ENCODE measurements at regions of chr5 and their contacts with region 1.

Region 1: DNA sequence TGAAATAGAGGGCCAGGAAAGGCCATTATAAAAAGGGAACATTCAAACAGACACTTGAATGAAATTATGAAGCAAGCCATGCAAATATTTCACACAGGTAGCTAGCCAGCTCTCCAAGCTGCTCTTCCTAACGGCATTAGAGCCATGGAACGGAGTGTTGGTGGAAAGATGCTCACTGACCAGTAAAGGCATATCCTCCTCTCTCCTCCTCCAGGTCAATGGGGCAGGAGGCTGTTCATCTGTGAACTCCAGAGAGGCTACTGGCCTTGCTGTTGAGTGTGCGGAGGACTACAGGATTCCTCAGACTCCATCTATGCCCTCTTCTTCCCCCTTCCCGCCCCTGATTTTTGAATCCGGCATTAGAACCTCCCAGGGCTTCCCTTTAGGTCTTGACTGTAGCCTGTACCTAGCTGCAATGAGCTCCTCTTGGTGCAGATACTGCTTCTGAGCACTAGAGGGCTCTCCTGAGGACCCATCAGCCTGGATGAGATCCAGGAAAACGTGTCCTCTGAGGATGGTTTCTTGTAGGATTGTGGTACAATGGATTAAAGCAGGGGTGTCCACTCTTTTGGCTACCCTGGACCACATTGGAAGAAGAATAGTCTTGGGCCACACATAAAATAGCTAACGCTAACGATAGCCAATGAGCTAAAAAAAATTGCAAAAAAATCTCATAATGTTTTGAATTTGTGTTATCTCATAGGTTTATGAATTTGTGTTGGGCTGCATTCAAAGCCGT is 162.2 kb downstream of the SREK1 start:
- DNase-seq: peak; percentile 34 to 57
- H3K4me3 ChIP-seq: no peak overlapping the region
- H3K27ac ChIP-seq: no peak overlapping the region
- H3K4me1 ChIP-seq: no peaks in the 10 kb centered on the region
- H3K27me3 ChIP-seq: no peaks in the 10 kb centered on the region
- CTCF ChIP-seq: peak; percentile 56 to 86 (median 85)
- EP300 ChIP-seq: no peak
- POLR2A ChIP-seq: no peak
- RAD21 ChIP-seq: peak; percentile 76 to 87

Region 2: DNA sequence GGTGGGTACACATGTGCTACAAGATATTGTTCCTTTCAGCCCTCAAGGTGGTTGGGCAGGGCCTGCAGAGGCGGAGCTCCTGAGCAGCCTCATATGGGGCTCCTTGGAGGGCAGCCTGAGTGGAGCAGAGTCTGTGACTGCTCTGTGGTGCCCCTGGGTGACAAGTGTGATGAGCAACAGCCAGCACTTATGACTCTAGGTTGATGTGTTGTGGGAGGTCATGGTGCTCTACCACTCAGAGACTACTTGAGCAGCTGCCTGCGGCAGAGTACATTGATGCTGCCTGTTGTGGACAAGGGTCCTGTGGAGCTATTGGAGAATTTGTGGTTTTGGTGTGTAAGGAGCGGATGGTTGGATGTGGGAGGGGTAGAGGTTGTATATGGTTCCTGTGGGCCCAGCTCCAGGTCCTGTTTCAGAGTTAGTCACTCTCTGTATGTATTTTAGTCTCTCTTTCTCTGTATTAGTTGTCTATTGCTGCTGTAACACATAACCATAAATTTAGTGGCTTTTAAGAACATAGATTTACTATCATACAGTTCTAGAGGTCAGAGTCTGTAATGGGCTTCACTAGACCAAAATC is 20.8 kb before region 1 on chr5:
- CTCF ChIA-PET with region 1: interaction called, 14 read pairs
- POLR2A ChIA-PET with region 1: no interaction called
- DNase-seq: no peak
- H3K4me3 ChIP-seq: no peak overlapping the region
- H3K27ac ChIP-seq: no peak overlapping the region
- H3K4me1 ChIP-seq: no peaks in the 10 kb centered on the region
- H3K27me3 ChIP-seq: no peaks in the 10 kb centered on the region
- CTCF ChIP-seq: no peak
- EP300 ChIP-seq: no peak
- POLR2A ChIP-seq: no peak
- RAD21 ChIP-seq: no peak

Region 3: DNA sequence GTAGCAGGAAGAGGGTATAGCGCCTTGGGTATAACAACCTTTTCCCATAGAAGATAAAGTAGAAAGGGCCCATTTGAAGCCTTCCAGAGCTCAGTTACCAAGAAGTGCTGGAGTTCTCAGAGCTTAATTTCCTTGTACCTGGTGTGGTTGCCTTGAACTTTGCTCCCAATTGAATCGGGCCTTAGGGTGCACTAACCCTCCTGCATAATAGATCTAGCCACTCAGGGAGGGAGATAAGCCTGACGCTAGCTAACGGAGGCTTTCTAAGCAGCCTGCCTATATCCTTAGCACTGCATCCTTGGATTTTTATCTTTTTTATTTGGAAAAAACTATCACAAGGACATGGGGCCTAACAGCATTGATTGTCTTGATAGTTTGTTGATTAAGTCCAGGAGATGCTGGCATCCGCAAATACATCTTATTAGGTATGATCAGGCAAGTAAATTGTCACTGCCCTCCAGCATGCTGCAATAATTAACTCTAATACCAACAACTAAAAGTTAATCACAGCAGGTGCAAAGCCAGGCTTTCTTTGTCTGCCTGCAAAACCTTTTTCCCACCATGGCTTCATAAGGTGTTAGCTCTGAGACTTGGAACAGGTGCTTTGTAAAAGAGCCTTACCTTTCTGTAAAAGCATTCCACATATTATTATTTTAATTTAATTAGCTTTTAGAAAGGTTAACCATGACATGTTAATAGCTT is 37.2 kb after region 1 on chr5:
- CTCF ChIA-PET with region 1: interaction called, 36 read pairs
- POLR2A ChIA-PET with region 1: no interaction called
- DNase-seq: no peak
- H3K4me3 ChIP-seq: no peak overlapping the region
- H3K27ac ChIP-seq: no peak overlapping the region
- H3K4me1 ChIP-seq: no peaks in the 10 kb centered on the region
- H3K27me3 ChIP-seq: no peaks in the 10 kb centered on the region
- CTCF ChIP-seq: no peak
- EP300 ChIP-seq: no peak
- POLR2A ChIP-seq: no peak
- RAD21 ChIP-seq: no peak

Region 4: DNA sequence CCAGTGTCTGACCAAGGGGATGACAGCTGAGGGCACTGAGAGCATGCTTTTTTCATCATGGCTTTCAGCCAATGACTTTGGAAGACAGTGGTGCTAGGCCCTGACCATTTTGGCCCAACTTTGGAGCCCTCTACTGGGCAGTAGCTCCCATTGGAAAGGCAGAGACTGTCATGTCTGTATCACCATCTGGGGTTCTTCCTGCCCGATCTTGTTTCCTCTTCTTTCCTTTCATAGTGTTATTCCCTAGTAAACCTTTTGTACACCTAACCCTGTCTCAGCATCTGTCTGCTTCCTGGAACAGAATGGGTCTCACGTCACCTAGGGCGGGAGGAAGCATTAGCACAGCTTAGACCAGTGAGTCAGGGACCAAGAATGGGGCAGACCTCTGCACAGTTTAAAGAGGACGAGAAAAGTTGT is 192.5 kb after region 1 on chr5:
- CTCF ChIA-PET with region 1: interaction called, 111 read pairs
- POLR2A ChIA-PET with region 1: no interaction called
- DNase-seq: no peak
- H3K4me3 ChIP-seq: no peak overlapping the region
- H3K27ac ChIP-seq: no peak overlapping the region
- H3K4me1 ChIP-seq: no peaks in the 10 kb centered on the region; a peak in 2 of 7 replicates
- H3K27me3 ChIP-seq: no peaks in the 10 kb centered on the region
- CTCF ChIP-seq: peak; percentile 30 to 54 (median 35); a peak in 3 of 4 replicates
- EP300 ChIP-seq: no peak
- POLR2A ChIP-seq: no peak
- RAD21 ChIP-seq: peak; percentile 58 to 68

Region 5: GRCh38 chr5:66724349-66725139 is 418.3 kb after region 1 on chr5:
- CTCF ChIA-PET with region 1: interaction called, 15 read pairs
- POLR2A ChIA-PET with region 1: no interaction called
- DNase-seq: no peak
- H3K4me3 ChIP-seq: no peak overlapping the region
- H3K27ac ChIP-seq: no peak overlapping the region
- H3K4me1 ChIP-seq: peaks cover 0 to 2% (median 0%) of the 10 kb centered on the region in 4 experiments; a peak in 3 of 7 replicates
- H3K27me3 ChIP-seq: no peaks in the 10 kb centered on the region
- CTCF ChIP-seq: no peak
- EP300 ChIP-seq: no peak
- POLR2A ChIP-seq: no peak
- RAD21 ChIP-seq: no peak

Region 6: DNA sequence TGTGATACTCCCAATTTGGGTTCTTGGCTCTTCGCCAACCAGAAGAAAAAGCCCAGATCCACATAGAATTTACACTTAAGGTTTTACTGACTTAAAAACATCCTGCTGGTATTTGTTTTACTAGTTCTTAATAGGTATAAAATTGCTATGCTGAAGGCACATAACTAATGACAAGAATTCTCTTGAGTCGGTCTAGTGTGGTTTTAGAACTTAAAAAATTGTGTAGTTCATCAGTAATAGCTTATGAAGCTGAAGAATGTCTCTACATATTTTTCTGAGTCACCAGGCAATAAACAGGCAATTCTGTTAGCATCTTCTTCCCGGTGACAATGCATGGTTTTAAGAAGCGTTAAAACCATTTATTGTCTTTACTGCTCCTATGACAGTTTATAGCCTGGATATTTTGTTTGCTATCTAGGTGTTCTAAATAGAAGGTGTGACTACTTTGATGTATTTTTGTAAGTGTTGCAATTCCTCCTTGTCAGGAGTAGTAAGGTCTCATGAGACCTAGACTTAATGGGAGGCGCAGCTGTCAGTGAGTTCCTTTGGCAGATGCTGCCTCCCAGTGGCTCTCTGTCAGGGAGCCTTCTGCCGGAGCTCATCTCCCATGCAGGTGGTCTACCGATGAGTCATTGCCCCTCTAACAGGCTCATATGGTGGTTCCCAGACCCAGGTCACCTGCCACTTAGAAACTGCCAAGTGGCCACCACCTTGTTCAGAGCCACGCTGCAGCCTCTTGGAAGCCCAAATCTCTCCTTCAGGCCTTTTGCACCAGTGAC is 463.8 kb after region 1 on chr5:
- CTCF ChIA-PET with region 1: interaction called, 140 read pairs
- POLR2A ChIA-PET with region 1: no interaction called
- DNase-seq: peak; percentile 41 to 58
- H3K4me3 ChIP-seq: no peak overlapping the region
- H3K27ac ChIP-seq: no peak overlapping the region
- H3K4me1 ChIP-seq: no peaks in the 10 kb centered on the region
- H3K27me3 ChIP-seq: peaks cover 0 to 1% (median 0%) of the 10 kb centered on the region in 4 experiments; a peak in 1 of 7 replicates
- CTCF ChIP-seq: peak; percentile 69 to 82 (median 74)
- EP300 ChIP-seq: no peak
- POLR2A ChIP-seq: no peak
- RAD21 ChIP-seq: peak; percentile 91 to 94